ENCODE measurements at regions of chr15 and their contacts with region 1.

Region 1: GRCh38 chr15:49573421-49573820 is 47.2 kb downstream of the FAM227B start:
- DNase-seq: no peak
- H3K4me3 ChIP-seq: no peak overlapping the region
- H3K27ac ChIP-seq: no peak overlapping the region
- H3K4me1 ChIP-seq: no peaks in the 10 kb centered on the region
- H3K27me3 ChIP-seq: no peaks in the 10 kb centered on the region
- CTCF ChIP-seq: no peak
- POLR2A ChIP-seq: no peak

Region 2: DNA sequence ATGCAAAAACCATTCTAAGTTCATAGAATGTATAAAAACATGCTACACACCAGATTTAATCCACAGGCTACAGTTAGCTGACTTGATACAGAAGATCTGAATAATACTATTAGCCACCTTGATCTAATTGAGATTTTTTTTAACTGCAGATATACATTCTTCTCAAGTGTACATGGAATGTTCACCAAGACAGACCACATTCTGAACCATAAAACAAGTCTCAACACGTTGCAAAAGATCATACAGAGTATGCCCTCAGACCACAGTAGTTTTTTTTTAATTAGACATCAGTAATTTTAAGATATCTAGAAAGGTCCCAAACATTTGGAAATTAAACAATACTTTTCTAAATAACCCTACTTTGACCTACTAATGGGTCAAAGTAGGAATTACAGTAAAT is 67.1 kb before region 1 on chr15:
- intact Hi-C with region 1: loop called in 1 of 2 experiments (anchors 5 kb)
- DNase-seq: no peak
- H3K4me3 ChIP-seq: no peak overlapping the region
- H3K27ac ChIP-seq: no peak overlapping the region
- H3K4me1 ChIP-seq: no peaks in the 10 kb centered on the region
- H3K27me3 ChIP-seq: no peaks in the 10 kb centered on the region
- CTCF ChIP-seq: no peak
- POLR2A ChIP-seq: no peak